MCF 10A (cell line): ENCODE measurements at regions of chr4 and their contacts with region 1.

Region 1: DNA sequence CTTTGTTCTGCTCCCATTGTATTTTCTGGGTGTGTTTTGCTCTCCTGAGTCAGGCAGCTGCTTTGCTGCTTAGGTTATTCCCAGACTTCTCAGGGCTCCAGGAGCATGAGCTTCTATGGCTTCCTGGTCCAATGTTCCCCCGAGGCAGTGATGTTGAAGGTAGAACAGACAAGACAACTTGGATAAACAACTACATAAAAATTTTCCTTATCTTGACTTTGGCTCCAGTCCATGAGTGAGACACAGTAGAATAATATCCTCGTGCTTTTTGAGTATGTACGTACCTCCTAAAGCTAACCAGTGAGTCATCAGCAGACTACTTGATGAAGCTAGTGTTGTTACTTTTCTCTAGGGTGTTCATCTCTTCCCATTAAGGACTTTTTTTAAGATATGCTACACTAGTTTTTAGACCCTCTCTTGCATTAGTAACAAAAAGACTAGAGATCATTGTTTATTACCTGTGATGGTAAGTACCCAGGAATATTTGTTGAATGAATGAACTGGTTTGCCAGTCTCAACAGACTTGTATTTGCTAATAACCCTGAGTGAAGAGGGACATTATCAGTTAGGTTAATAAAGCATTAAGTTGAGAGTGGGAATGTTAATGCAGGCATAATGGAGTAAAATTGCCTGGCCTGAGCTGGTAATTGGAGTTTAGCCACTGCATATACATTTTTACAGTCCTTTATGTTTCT is 131.9 kb downstream of the FHIP1A start:
- DNase-seq: peak; percentile 98
- H3K4me3 Mint-ChIP-seq: peak overlapping the region; percentile 57
- H3K27ac Mint-ChIP-seq: peak overlapping the region; percentile 85
- H3K4me1 Mint-ChIP-seq: peaks cover 42% of the 10 kb centered on the region
- H3K27me3 Mint-ChIP-seq: no peaks in the 10 kb centered on the region
- CTCF ChIP-seq: no peak

Region 2: GRCh38 chr4:151408630-151409469 is 132.0 kb before region 1 on chr4 and contains the start of gene FHIP1A:
- CTCF ChIA-PET with region 1: interaction called, 6 read pairs
- POLR2A ChIA-PET with region 1: interaction called, 90 read pairs
- intact Hi-C with region 1: loop called (anchors 1 kb)
- DNase-seq: peak; percentile 95
- H3K4me3 Mint-ChIP-seq: peak within 1 kb of the TSS; percentile 90
- H3K27ac Mint-ChIP-seq: peak within 1 kb of the TSS; percentile 94
- H3K4me1 Mint-ChIP-seq: peaks cover 22% of the 10 kb centered on the region
- H3K27me3 Mint-ChIP-seq: no peaks in the 10 kb centered on the region
- CTCF ChIP-seq: no peak
- total RNA-seq, gene FHIP1A: 14.8 and 19.8 TPM in 2 replicates

Region 3: DNA sequence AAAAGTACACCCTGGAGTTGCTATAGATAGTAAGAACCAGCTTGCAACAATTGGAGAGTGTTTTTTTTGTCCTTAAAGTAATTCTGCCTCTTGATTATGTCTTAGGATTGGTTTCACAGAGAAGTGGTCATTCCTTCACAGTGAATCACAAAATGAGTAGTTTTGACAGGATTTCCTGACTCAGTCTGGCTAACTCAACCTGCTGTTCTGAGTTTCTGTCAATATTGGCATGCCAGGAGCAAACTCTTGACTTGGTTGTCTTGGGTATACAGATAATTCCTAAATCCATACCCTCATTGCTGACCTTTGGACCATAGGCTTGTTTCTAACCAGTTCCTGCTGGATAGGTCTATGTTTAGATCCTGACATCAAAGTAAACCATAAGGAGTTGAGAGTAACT is 122.5 kb before region 1 on chr4:
- CTCF ChIA-PET with region 1: interaction called, 3 read pairs
- POLR2A ChIA-PET with region 1: interaction called, 14 read pairs
- intact Hi-C with region 1: no loop called
- DNase-seq: peak; percentile 86
- H3K4me3 Mint-ChIP-seq: no peak overlapping the region
- H3K27ac Mint-ChIP-seq: peak overlapping the region; percentile 89
- H3K4me1 Mint-ChIP-seq: peaks cover 43% of the 10 kb centered on the region
- H3K27me3 Mint-ChIP-seq: no peaks in the 10 kb centered on the region
- CTCF ChIP-seq: no peak

Region 4: DNA sequence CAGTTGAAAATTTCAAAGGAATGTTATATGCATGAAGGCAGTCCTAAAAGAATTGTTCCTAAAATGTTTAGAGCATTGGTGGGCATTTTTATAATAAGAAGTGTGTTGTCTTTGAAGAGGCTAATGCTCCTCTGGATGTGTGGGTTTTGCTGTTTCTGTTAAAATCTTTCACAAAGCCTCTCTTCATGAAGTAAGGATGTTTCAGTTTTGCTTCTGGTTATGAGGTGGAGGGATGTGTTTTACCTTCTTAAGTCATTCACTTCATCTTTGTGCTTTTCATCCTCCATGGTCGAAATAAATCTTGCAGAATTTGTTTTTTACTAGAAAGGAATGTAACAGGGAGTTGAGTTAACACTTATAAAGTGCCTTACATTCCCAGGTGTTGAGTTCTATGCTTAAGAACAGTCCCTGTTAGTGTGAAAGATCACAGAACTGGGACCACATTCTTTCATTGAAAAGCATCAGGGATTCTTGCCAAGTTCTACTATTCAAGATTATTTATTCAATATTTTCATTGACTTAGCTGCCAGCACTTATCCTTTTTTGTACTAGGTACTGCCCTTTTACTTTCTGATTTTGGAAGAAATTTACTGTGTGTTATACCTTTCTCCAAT is 110.8 kb before region 1 on chr4:
- CTCF ChIA-PET with region 1: no interaction called
- POLR2A ChIA-PET with region 1: interaction called, 13 read pairs
- intact Hi-C with region 1: no loop called
- DNase-seq: no peak
- H3K4me3 Mint-ChIP-seq: no peak overlapping the region
- H3K27ac Mint-ChIP-seq: peak overlapping the region; percentile 15
- H3K4me1 Mint-ChIP-seq: peaks cover 57% of the 10 kb centered on the region
- H3K27me3 Mint-ChIP-seq: no peaks in the 10 kb centered on the region
- CTCF ChIP-seq: no peak

Region 5: GRCh38 chr4:151484396-151485102 is 56.3 kb before region 1 on chr4:
- CTCF ChIA-PET with region 1: no interaction called
- POLR2A ChIA-PET with region 1: interaction called, 13 read pairs
- intact Hi-C with region 1: no loop called
- DNase-seq: peak; percentile 84
- H3K4me3 Mint-ChIP-seq: no peak overlapping the region
- H3K27ac Mint-ChIP-seq: peak overlapping the region; percentile 34
- H3K4me1 Mint-ChIP-seq: peaks cover 20% of the 10 kb centered on the region
- H3K27me3 Mint-ChIP-seq: no peaks in the 10 kb centered on the region
- CTCF ChIP-seq: no peak

Region 6: DNA sequence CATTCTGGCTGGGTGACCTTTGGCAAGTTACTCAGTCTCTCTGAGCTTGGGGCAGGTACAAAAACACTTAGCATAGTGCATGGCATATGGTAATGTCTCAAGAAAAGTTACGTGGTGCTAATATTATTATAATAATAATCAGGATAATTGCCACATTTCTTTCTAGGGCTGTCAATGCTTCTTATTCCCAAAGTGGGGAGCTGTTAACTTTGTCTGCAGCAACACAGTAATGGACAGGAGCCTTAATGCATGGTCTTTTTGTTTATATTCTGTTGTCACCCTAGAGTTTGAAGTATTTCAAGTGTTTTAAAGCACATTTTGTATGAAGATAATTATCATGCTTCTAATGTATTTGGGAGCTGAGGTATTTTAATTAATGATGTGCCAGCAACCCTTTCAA is 10.1 kb before region 1 on chr4:
- CTCF ChIA-PET with region 1: interaction called, 7 read pairs
- POLR2A ChIA-PET with region 1: interaction called, 10 read pairs
- intact Hi-C with region 1: no loop called
- DNase-seq: peak; percentile 37
- H3K4me3 Mint-ChIP-seq: no peak overlapping the region
- H3K27ac Mint-ChIP-seq: no peak overlapping the region
- H3K4me1 Mint-ChIP-seq: peaks cover 13% of the 10 kb centered on the region
- H3K27me3 Mint-ChIP-seq: no peaks in the 10 kb centered on the region
- CTCF ChIP-seq: peak; percentile 43

Region 7: GRCh38 chr4:151563194-151563593 is 22.3 kb after region 1 on chr4:
- CTCF ChIA-PET with region 1: interaction called, 3 read pairs
- POLR2A ChIA-PET with region 1: interaction called, 17 read pairs
- intact Hi-C with region 1: no loop called
- DNase-seq: peak; percentile 79
- H3K4me3 Mint-ChIP-seq: no peak overlapping the region
- H3K27ac Mint-ChIP-seq: peak overlapping the region; percentile 7
- H3K4me1 Mint-ChIP-seq: peaks cover 14% of the 10 kb centered on the region
- H3K27me3 Mint-ChIP-seq: no peaks in the 10 kb centered on the region
- CTCF ChIP-seq: no peak